ENCODE measurements at regions of chr11 and their contacts with region 1.

Region 1: DNA sequence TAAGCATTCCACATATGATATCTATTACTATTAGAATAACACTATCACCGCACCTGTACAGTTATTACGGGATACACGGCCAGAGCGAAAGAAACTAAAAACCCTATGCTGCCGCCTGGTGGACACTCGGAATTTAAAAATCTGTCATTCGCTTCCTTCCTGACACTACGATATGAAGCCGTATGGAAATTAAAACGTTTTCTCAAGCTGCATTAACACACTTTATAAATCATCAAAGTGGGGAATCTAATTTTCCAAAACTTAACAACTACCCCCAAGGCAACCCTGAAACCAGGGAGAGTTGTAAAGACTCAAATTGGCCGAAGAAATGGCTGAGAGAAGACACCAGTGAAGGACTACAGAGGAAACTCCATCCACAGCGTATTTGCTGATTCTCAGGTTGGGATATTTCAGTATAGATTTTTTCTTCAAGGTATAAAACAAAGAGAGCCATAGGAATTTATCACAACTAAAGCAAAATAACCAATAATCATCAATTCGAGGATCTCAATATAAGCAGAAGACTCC is 1.4 kb downstream of the CCDC73 start:
- DNase-seq: peak in 1 of 2 donors; percentile 46
- ATAC-seq: no peak
- H3K4me3 ChIP-seq: no peak overlapping the region
- H3K27ac ChIP-seq: no peak overlapping the region
- H3K4me1 ChIP-seq: no peaks in the 10 kb centered on the region
- H3K27me3 ChIP-seq: no peaks in the 10 kb centered on the region

Region 2: GRCh38 chr11:32326522-32326921 is 466.5 kb before region 1 on chr11:
- intact Hi-C with region 1: loop called (anchors 5 to 10 kb)
- DNase-seq: no peak
- ATAC-seq: no peak
- H3K4me3 ChIP-seq: no peak overlapping the region
- H3K27ac ChIP-seq: no peak overlapping the region
- H3K4me1 ChIP-seq: no peaks in the 10 kb centered on the region
- H3K27me3 ChIP-seq: no peaks in the 10 kb centered on the region

Measured in aorta (tissue), 5 donors.